AG04450 (cell line): ENCODE measurements at regions of chr9 and their contacts with region 1.

Region 1: DNA sequence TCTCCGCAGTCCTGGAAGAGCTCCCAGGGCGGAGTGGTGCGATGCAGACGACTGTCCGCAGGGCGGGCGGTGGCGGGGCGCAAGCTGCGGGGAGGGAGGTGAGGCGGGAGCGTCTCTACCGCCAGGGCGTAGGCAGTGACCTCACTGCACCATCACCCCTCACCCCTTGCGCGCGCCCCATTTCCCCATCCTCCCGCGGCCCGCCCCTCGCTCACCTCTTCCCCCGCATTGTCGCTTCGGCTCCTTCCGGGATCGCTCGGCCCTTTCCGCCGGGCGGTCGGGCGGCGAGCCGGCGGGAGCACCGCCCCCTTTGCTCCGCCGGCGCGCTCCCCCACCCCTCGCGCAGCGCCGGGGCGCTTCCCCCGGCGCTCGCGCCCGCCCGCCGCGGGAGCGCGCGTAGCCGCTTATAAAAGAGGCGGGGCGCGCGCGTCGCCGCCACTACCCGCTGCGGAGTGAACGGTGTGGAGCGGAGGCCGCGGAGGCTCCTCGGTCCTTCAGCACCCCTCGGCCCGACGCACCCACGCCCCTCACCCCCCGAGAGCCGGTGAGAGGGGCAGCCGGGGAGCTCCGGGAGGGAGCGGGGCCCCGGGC is at the start of gene SPTAN1:
- DNase-seq: peak; percentile 72
- H3K4me3 ChIP-seq: peak within 1 kb of the TSS; percentile 87
- H3K27ac ChIP-seq: peak within 1 kb of the TSS; percentile 80
- H3K27me3 ChIP-seq: no peaks in the 10 kb centered on the region
- CTCF ChIP-seq: 0 out of 2 replicates have a peak, but pooled peaks have one; percentile 21
- polyA plus RNA-seq, gene SPTAN1: 211 and 275 TPM in 2 replicates

Region 2: GRCh38 chr9:128523199-128523925 is 28.9 kb before region 1 on chr9:
- CTCF ChIA-PET with region 1: no interaction called
- POLR2A ChIA-PET with region 1: interaction called, 13 read pairs
- DNase-seq: peak; percentile 67
- H3K4me3 ChIP-seq: no peak overlapping the region
- H3K27ac ChIP-seq: peak overlapping the region; percentile 52
- H3K27me3 ChIP-seq: no peaks in the 10 kb centered on the region
- CTCF ChIP-seq: no peak